ENCODE measurements at regions of chr12 and their contacts with region 1.

Region 1: GRCh38 chr12:48957141-48958048 is at the start of gene ARF3:
- DNase-seq: peak; percentile 97
- ATAC-seq: peak; percentile 99
- H3K4me3 Mint-ChIP-seq: peak within 1 kb of the TSS; percentile 92
- H3K27ac Mint-ChIP-seq: peak within 1 kb of the TSS; percentile 74
- H3K4me1 Mint-ChIP-seq: peaks cover 23% of the 10 kb centered on the region
- H3K27me3 Mint-ChIP-seq: no peaks in the 10 kb centered on the region
- total RNA-seq, gene ARF3: 84.7 to 96.1 TPM

Region 2: DNA sequence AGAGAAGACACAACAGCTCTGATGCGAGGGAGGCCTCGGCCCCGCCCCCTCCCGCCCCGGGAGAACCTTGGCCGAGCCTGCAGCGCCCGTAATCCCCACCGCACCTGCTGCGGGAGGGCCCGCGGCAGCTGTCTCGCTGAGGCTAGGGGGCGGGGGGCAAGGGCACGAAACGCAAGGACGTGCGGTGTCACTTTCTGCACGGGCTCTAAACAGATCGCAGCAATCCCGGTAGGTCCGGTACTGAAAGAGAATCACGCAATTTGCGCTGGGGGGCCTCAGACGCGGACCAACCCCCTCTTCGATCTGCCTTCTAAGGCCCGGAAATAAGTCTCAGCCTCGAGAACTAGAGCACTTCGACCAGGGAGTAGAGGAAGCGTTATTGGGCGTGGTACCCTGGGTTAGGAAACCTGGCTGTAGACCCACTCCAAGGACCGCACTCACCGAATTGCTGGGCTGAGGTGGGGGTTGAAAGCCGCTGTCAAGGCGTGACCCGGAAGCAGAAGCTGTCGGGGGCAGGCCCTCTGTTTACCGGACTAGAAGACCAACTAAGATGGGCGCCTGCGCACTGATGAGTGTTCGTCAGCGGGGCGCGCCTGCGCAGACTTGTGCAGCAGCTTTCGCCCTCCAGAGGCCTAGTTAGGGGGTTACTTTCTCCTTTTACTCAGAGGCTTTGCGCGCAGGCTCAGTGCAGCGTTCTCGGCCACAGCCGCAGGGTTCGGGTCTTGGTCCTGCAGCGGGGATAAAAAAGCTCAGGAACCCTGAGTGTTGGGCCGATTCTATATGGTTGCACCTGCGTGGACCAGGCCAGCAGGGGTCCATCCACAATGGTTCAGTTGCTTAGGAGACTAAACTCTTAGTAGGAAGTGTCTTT is 800.1 kb before region 1 on chr12 and contains the start of gene ASB8:
- CTCF ChIA-PET with region 1: no interaction called
- POLR2A ChIA-PET with region 1: no interaction called
- intact Hi-C with region 1: loop called in 1 of 2 experiments (anchors 5 kb)
- DNase-seq: peak; percentile 100
- ATAC-seq: peak; percentile 96
- H3K4me3 Mint-ChIP-seq: peak within 1 kb of the TSS; percentile 88
- H3K27ac Mint-ChIP-seq: peak within 1 kb of the TSS; percentile 94
- H3K4me1 Mint-ChIP-seq: peaks cover 40% of the 10 kb centered on the region
- H3K27me3 Mint-ChIP-seq: no peaks in the 10 kb centered on the region
- total RNA-seq, gene ASB8: 28.8 to 33.0 TPM

Region 3: GRCh38 chr12:48814262-48815125 is 142.9 kb before region 1 on chr12:
- CTCF ChIA-PET with region 1: no interaction called
- POLR2A ChIA-PET with region 1: no interaction called
- intact Hi-C with region 1: loop called in 1 of 2 experiments (anchors 1 kb)
- DNase-seq: peak; percentile 90
- ATAC-seq: peak; percentile 77
- H3K4me3 Mint-ChIP-seq: peak overlapping the region; percentile 81
- H3K27ac Mint-ChIP-seq: no peak overlapping the region
- H3K4me1 Mint-ChIP-seq: peaks cover 23% of the 10 kb centered on the region
- H3K27me3 Mint-ChIP-seq: peaks cover 12% of the 10 kb centered on the region

Region 4: DNA sequence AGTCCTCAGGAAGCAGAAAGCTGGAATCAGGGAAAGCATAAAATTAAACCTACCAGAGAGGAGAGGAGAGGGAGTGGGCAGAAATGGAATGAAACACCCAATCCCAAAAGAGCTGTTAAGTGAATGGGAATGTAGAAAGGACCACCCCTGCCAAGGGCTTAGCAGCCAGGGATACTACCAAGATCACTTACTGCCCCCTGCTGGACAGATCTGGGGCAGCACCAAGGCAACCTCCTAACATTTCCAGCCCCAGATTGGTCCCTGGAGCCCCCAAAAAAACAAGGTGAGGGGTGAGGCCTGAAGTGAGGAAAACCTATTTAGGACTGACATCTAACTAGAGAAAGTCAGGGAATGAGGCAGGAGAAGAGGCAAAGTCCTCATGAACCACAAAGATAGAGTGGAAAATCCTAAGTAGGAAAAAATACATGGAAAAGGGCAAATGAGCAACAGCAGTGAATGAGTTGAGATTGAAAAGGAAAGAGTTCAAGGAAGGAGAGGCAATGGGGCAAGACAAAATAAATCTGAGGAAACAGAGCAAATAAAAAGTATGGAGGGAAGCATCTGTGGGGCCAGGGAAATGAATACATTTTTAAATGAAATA is 20.9 kb before region 1 on chr12:
- CTCF ChIA-PET with region 1: interaction called, 12 read pairs
- POLR2A ChIA-PET with region 1: no interaction called
- intact Hi-C with region 1: no loop called
- DNase-seq: peak; percentile 89
- ATAC-seq: peak; percentile 82
- H3K4me3 Mint-ChIP-seq: no peak overlapping the region
- H3K27ac Mint-ChIP-seq: no peak overlapping the region
- H3K4me1 Mint-ChIP-seq: peaks cover 23% of the 10 kb centered on the region
- H3K27me3 Mint-ChIP-seq: no peaks in the 10 kb centered on the region

Region 5: DNA sequence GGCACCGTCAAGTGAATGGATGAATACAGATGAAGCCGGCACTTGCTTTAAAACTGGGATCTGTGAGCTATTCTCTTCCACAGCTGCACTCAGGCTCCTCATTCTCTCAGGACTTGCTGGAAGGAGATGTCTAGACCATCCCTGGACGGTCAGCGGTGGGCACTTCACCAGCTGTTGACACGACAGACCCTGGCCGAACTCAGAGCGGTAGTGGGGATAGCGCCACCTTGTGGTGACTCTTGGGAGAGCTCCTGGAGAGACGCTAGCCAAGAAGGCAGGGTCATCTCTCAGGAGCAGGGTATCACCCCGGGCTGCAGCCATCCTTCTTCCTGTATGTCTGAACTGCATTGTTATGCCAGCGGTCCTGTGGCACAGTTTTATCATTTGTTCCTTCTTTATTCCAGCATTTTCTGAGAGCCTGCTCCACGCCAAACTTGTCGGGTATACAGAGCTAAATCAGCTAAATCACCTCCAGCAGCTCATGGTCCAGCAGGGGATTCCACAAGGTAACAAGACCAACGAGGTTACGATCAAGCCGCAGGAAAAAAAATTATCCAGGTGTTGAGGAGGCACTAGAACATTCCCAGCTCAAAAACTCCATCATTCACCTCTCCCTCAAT is 30.7 kb after region 1 on chr12:
- CTCF ChIA-PET with region 1: interaction called, 20 read pairs
- POLR2A ChIA-PET with region 1: no interaction called
- intact Hi-C with region 1: no loop called
- DNase-seq: peak; percentile 89
- ATAC-seq: peak; percentile 85
- H3K4me3 Mint-ChIP-seq: no peak overlapping the region
- H3K27ac Mint-ChIP-seq: no peak overlapping the region
- H3K4me1 Mint-ChIP-seq: no peaks in the 10 kb centered on the region
- H3K27me3 Mint-ChIP-seq: peaks cover 41% of the 10 kb centered on the region

Region 6: DNA sequence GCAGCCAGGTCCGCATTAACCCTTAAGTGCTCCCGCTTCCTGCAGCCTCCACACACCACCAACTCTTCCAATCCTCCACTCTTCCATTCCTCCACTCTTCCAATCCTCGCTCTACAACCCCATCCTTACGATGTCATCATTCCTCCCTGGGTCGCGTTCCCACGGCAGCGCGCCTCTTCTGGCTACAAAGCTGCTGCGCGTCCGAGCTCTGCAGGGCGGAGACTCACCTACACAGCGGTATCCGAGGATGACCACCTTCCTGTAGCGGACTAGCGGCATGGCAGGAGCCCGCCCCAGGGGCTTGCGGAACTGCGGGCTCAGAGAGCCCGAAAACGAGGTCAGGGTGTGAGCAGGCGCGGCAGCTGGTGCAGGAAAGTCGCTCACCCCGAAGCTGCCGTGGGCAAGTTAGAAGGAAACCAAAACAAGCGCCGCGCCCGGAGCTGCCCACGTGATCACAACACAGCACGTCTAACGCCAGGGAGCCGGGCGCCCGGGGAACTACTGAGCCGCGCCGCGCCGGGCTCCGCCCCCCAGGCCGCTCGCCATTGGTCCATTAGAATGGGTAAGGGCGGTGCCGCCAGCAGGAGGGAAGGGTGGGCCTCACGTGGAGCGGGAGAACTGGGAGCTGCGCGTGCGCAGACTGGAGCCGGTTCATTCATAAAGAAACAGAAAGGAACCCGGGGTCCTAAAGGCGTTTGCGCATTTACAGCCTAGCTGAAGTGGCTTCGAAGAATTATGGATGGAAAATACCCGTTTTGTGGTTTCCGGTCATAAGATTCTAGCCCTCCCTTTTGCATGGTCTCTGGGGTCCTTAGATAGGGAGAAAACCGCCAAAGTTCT is 112.3 kb after region 1 on chr12 and contains the start of gene RHEBL1:
- CTCF ChIA-PET with region 1: interaction called, 3 read pairs
- POLR2A ChIA-PET with region 1: no interaction called
- intact Hi-C with region 1: loop called in 1 of 2 experiments (anchors 1 kb)
- DNase-seq: peak; percentile 100
- ATAC-seq: peak; percentile 100
- H3K4me3 Mint-ChIP-seq: peak within 1 kb of the TSS; percentile 94
- H3K27ac Mint-ChIP-seq: peak within 1 kb of the TSS; percentile 91
- H3K4me1 Mint-ChIP-seq: peaks cover 15% of the 10 kb centered on the region
- H3K27me3 Mint-ChIP-seq: no peaks in the 10 kb centered on the region
- total RNA-seq, gene RHEBL1: 6.7 to 13.3 TPM

Measured in activated CD4-positive, alpha-beta T cell treated with anti-CD3 and anti-CD28 coated beads for 36 hours (primary cell).